Brain microvascular endothelial cell (primary cell): ENCODE measurements at regions of chr11 and their contacts with region 1.

Region 1: DNA sequence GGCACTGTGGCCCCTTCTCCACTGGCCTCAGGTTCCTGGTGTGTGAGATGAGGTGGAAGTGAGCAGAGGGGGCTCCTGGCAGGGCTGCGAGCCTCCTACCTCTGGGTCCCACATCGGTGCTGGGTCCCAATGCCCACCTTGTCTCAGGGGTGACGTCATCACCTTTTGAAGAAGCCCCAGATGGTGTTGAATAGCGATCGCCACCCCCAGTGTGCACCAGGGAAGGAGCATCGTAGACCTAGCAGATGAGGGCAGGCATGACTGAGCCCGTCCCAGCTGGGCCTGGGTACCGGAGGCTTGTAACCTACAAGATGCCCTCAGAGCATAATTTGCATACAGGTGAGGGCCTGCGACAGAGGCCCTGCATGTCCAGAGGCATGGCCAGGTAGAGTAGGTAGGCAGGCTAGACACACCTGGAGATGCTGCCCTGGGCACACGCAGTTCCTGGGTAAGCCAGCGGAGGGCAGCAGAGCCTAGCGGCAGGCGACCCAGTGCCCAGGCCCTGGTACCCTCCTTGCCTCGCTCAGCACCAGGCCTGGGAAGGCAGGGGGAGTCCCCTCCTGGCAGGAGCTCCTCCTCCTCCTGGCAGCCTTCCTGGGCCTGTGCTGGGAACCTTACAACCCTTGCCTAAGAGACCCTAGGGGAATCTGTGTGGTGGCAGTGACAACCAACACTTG is 52.5 kb downstream of the TPCN2 start:
- DNase-seq: peak; percentile 19
- H3K4me3 ChIP-seq: no peak overlapping the region
- H3K27ac ChIP-seq: no peak overlapping the region
- H3K27me3 ChIP-seq: no peaks in the 10 kb centered on the region
- CTCF ChIP-seq: peak; percentile 100

Region 2: DNA sequence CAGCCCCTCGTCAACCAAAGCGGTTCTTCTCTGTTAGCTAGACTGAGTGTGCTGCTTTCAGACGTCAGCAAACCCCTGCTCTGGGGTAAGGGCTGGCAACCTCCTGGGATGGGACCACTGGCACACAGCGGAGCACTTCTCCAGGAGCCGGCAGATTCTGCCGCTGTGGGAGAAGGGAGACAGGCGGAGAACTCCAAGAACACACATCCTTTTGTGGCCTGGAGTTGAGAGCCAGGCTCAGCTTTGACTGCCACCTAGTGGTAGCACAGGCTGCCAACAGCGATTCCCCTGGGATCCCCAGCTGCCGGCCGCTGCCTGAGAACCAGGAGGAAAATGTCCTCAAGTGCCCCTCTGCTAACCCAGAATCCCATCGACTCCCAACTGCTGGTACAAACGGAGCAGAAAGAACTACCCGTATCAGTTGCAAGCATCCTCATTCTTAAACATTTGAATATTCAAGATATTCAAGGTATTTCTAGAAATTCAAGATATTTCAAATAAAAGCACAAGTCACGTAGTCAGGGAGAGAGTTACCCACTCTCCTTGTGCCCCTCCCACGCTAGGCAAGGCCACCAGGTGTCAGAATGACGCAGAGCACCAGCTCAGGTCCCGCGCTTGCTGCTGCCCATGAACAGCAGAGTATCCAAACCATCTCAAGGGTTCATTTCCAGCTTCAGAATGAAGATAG is 569.0 kb after region 1 on chr11:
- in situ Hi-C with region 1: loop called (anchors 25 kb)
- DNase-seq: peak; percentile 82
- H3K4me3 ChIP-seq: no peak overlapping the region
- H3K27ac ChIP-seq: no peak overlapping the region
- H3K27me3 ChIP-seq: no peaks in the 10 kb centered on the region
- CTCF ChIP-seq: peak; percentile 98